ENCODE measurements at regions of chr19 and their contacts with region 1.

Region 1: DNA sequence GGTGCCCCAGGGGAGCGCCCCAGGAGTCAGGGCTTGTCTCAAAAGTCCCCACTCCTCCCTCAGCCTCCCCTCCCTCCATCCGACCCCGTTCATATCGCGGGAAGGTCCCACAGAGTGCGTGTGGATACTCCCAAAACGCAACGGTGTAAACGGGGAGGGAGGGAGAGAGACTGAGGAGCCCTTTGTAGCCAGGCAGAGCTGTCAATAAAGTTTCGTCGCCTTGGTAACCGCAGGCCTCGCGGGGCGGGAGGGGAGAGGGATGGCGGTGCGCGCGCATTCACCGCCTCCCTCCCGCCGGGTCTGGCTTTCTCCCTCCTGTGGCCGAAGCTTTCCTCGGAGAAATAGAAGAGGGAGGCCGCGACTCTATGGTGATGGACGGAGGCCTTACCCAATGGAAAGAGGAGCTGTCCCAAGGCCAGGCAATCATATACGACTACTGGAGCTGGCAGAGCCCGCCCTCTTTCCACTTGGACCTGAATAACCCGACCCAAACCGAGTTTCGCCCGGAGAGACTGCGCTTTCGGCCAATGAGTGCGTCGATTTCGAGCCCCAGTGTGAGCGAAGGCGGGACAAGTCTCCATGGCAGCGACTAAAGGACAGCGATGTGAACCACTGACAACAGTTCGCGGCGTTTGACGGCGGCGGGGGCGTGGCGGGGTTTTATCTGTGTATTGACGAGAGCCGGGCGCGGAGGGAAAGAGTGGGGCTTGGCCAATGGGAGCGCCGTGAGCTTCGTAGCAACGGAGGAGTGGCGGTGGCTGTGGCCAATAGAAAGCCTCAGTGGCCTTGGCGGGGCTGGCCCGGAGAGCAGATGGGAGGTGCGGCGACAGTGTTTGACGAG is at the start of gene KMT5C:
- DNase-seq: peak; percentile 100
- H3K4me3 ChIP-seq: peak within 1 kb of the TSS; percentile 38 to 69 (median 65)
- H3K27ac ChIP-seq: peak within 1 kb of the TSS; percentile 92
- H3K4me1 ChIP-seq: peaks cover 10% of the 10 kb centered on the region
- H3K27me3 ChIP-seq: peaks cover 0 to 3% of the 10 kb centered on the region in 2 experiments
- CTCF ChIP-seq: peak; percentile 15 to 34
- POLR2A ChIP-seq: no peak
- total RNA-seq, gene KMT5C: 11.4 and 13.5 TPM in 2 replicates

Region 2: GRCh38 chr19:55216461-55217198 is 122.6 kb before region 1 on chr19:
- CTCF ChIA-PET with region 1: no interaction called
- POLR2A ChIA-PET with region 1: no interaction called
- dilution Hi-C with region 1: no loop called
- intact Hi-C with region 1: loop called (anchors 2 kb)
- DNase-seq: peak; percentile 97
- H3K4me3 ChIP-seq: peak overlapping the region in 1 of 3 experiments; percentile 3
- H3K27ac ChIP-seq: peak overlapping the region; percentile 65
- H3K4me1 ChIP-seq: peaks cover 9% of the 10 kb centered on the region
- H3K27me3 ChIP-seq: no peaks in the 10 kb centered on the region
- CTCF ChIP-seq: no peak
- POLR2A ChIP-seq: no peak

Region 3: GRCh38 chr19:55265173-55265572 is 74.1 kb before region 1 on chr19:
- CTCF ChIA-PET with region 1: no interaction called
- POLR2A ChIA-PET with region 1: no interaction called
- dilution Hi-C with region 1: no loop called
- intact Hi-C with region 1: no loop called
- DNase-seq: no peak
- H3K4me3 ChIP-seq: no peak overlapping the region
- H3K27ac ChIP-seq: no peak overlapping the region
- H3K4me1 ChIP-seq: no peaks in the 10 kb centered on the region
- H3K27me3 ChIP-seq: no peaks in the 10 kb centered on the region
- CTCF ChIP-seq: no peak
- POLR2A ChIP-seq: no peak

Region 4: DNA sequence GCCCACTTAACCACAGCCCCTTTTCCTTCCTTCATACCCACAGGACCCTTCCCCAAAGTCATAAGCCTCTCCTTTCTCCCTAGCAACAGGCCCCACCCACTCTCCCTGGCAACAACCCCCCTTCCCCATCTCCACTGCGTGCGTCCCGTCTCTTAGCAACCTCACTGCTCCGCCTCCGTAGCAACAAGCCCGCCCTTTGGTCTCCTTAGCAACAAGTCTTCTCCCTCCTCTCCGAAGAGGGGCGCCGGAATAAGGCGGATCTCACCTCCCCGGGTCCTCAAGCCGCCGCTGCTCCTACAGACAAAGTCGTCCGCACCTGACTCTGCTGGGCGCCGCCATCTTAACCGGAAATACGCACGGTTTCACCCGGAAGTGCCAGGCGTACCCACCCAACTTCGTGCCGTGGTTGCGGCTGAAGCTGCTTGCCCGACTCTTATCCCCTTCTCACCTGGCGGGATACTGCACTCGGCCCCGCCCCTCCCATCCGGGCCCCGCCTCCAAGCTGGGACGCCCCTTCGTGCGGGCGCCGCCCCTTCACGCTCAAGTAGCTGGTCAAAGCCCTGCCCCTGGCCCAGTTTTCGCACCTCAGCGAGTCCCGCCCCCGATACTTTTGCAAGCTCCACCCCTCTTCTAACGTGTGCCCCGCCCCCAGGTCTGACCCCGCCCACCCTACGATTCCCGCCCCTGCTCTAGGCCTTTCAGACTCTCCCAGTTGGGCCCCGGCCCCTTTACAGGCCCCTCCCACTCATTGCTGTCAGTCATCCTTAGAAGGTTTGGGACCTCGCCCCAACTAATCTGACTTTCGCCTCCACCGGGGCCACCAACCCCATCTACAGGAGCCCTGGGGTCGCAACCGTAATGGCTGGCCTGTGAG is 59.3 kb before region 1 on chr19 and contains the start of gene HSPBP1:
- CTCF ChIA-PET with region 1: no interaction called
- POLR2A ChIA-PET with region 1: no interaction called
- dilution Hi-C with region 1: no loop called
- intact Hi-C with region 1: loop called (anchors 2 kb)
- DNase-seq: peak; percentile 93
- H3K4me3 ChIP-seq: peak within 1 kb of the TSS; percentile 66 to 96 (median 79)
- H3K27ac ChIP-seq: peak within 1 kb of the TSS; percentile 65
- H3K4me1 ChIP-seq: peaks cover 3% of the 10 kb centered on the region
- H3K27me3 ChIP-seq: peaks cover 5 to 6% of the 10 kb centered on the region in 2 experiments
- CTCF ChIP-seq: no peak
- POLR2A ChIP-seq: peak; percentile 44
- total RNA-seq, gene HSPBP1: 30.4 and 38.5 TPM in 2 replicates

Region 5: GRCh38 chr19:55322204-55322885 is 16.9 kb before region 1 on chr19:
- CTCF ChIA-PET with region 1: interaction called, 10 read pairs
- POLR2A ChIA-PET with region 1: no interaction called
- dilution Hi-C with region 1: no loop called
- intact Hi-C with region 1: no loop called
- DNase-seq: no peak
- H3K4me3 ChIP-seq: no peak overlapping the region
- H3K27ac ChIP-seq: no peak overlapping the region
- H3K4me1 ChIP-seq: no peaks in the 10 kb centered on the region
- H3K27me3 ChIP-seq: peaks cover 0 to 2% of the 10 kb centered on the region in 2 experiments
- CTCF ChIP-seq: no peak
- POLR2A ChIP-seq: no peak

Region 6: GRCh38 chr19:55385740-55386529 is 46.7 kb after region 1 on chr19 and contains the start of gene RPL28:
- CTCF ChIA-PET with region 1: interaction called, 19 read pairs
- POLR2A ChIA-PET with region 1: interaction called, 9 read pairs
- dilution Hi-C with region 1: no loop called
- intact Hi-C with region 1: loop called (anchors 1 kb)
- DNase-seq: peak; percentile 99
- H3K4me3 ChIP-seq: peak within 1 kb of the TSS; percentile 33 to 69 (median 67)
- H3K27ac ChIP-seq: peak within 1 kb of the TSS; percentile 75
- H3K4me1 ChIP-seq: peaks cover 31% of the 10 kb centered on the region
- H3K27me3 ChIP-seq: no peaks in the 10 kb centered on the region
- CTCF ChIP-seq: no peak
- POLR2A ChIP-seq: peak; percentile 100
- total RNA-seq, gene RPL28: 1,738 and 1,872 TPM in 2 replicates

Region 7: GRCh38 chr19:55398200-55398925 is 59.1 kb after region 1 on chr19:
- CTCF ChIA-PET with region 1: no interaction called
- POLR2A ChIA-PET with region 1: no interaction called
- dilution Hi-C with region 1: no loop called
- intact Hi-C with region 1: no loop called
- DNase-seq: no peak
- H3K4me3 ChIP-seq: no peak overlapping the region
- H3K27ac ChIP-seq: no peak overlapping the region
- H3K4me1 ChIP-seq: no peaks in the 10 kb centered on the region
- H3K27me3 ChIP-seq: no peaks in the 10 kb centered on the region
- CTCF ChIP-seq: no peak
- POLR2A ChIP-seq: no peak

Region 8: GRCh38 chr19:55447421-55448174 is 108.3 kb after region 1 on chr19:
- CTCF ChIA-PET with region 1: no interaction called
- POLR2A ChIA-PET with region 1: no interaction called
- dilution Hi-C with region 1: no loop called
- intact Hi-C with region 1: no loop called
- DNase-seq: no peak
- H3K4me3 ChIP-seq: no peak overlapping the region
- H3K27ac ChIP-seq: no peak overlapping the region
- H3K4me1 ChIP-seq: no peaks in the 10 kb centered on the region
- H3K27me3 ChIP-seq: peaks cover 38% of the 10 kb centered on the region in 2 experiments
- CTCF ChIP-seq: no peak
- POLR2A ChIP-seq: no peak

Region 9: GRCh38 chr19:55599468-55600279 is 260.4 kb after region 1 on chr19 and contains the start of gene FIZ1:
- CTCF ChIA-PET with region 1: no interaction called
- POLR2A ChIA-PET with region 1: no interaction called
- dilution Hi-C with region 1: no loop called
- intact Hi-C with region 1: loop called (anchors 1 kb)
- DNase-seq: peak; percentile 99
- H3K4me3 ChIP-seq: peak within 1 kb of the TSS; percentile 78 to 92 (median 89)
- H3K27ac ChIP-seq: peak within 1 kb of the TSS; percentile 98
- H3K4me1 ChIP-seq: peaks cover 12% of the 10 kb centered on the region
- H3K27me3 ChIP-seq: no peaks in the 10 kb centered on the region
- CTCF ChIP-seq: no peak
- POLR2A ChIP-seq: no peak
- total RNA-seq, gene FIZ1: 14.7 and 15.6 TPM in 2 replicates